ENCODE measurements at regions of chr1 and their contacts with region 1.

Region 1: GRCh38 chr1:223081181-223081994 is 61.7 kb downstream of the TLR5 start:
- DNase-seq: peak; percentile 88 to 93 (median 92)
- ATAC-seq: peak; percentile 91 to 92
- H3K4me3 ChIP-seq: peak overlapping the region; percentile 51
- H3K27ac ChIP-seq: peak overlapping the region; percentile 52
- H3K4me1 ChIP-seq: peaks cover 5% of the 10 kb centered on the region
- H3K27me3 ChIP-seq: no peaks in the 10 kb centered on the region

Region 2: GRCh38 chr1:222732216-222733159 is 348.9 kb before region 1 on chr1:
- intact Hi-C with region 1: loop called in 2 of 4 experiments (anchors 5 to 10 kb)
- DNase-seq: no peak
- ATAC-seq: no peak
- H3K4me3 ChIP-seq: no peak overlapping the region
- H3K27ac ChIP-seq: no peak overlapping the region
- H3K4me1 ChIP-seq: no peaks in the 10 kb centered on the region
- H3K27me3 ChIP-seq: no peaks in the 10 kb centered on the region

Region 3: GRCh38 chr1:222739465-222739864 is 341.9 kb before region 1 on chr1:
- intact Hi-C with region 1: loop called (anchors 2 to 10 kb)
- DNase-seq: no peak
- ATAC-seq: no peak
- H3K4me3 ChIP-seq: no peak overlapping the region
- H3K27ac ChIP-seq: no peak overlapping the region
- H3K4me1 ChIP-seq: no peaks in the 10 kb centered on the region
- H3K27me3 ChIP-seq: no peaks in the 10 kb centered on the region

Region 4: GRCh38 chr1:222792744-222793143 is 288.6 kb before region 1 on chr1:
- intact Hi-C with region 1: loop called (anchors 5 kb)
- DNase-seq: no peak
- ATAC-seq: no peak
- H3K4me3 ChIP-seq: no peak overlapping the region
- H3K27ac ChIP-seq: no peak overlapping the region
- H3K4me1 ChIP-seq: no peaks in the 10 kb centered on the region
- H3K27me3 ChIP-seq: no peaks in the 10 kb centered on the region

Region 5: DNA sequence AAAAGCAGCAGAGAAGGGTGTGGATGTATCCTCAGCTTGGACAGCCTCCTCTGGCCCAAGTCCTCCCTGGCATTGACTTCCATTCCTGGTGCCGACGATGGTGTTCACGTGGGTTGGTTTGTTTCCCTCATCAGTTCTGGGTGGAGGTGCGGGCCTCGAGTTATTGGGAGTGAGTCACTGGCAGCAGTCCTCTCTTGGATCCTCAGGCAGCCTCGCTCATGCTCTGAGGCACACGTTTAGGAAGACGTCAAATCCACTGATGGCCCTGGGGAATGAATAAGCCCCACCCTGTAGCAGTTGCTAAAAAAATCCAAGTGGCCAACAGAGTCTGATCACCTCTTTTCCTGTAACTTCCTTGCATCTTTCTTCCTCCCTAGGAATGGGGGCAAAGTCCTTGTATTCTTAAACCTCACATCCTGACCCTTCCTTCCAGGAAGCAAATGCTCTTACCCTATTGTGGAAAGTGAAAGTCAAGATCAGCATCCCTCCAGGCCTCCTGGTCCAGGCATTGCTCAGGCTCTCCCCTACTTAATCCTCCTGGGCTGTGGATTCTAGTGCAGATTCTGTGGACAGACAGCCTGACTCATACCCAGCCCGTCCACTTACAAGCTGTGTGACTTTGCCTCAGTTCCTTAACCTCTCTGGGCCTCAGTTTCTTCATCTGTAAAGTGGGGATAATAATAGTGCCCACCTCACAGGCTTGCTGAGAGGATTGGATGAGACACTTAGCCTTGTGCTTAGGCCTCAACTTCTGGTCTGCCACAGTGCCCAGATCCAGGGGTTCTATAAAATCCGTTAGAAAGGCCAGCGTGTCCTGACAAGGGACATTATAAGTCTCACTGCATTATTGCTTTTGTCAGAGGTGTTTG is 49.4 kb before region 1 on chr1:
- intact Hi-C with region 1: no loop called
- DNase-seq: peak; percentile 74 to 85 (median 77)
- ATAC-seq: peak; percentile 88 to 95
- H3K4me3 ChIP-seq: no peak overlapping the region
- H3K27ac ChIP-seq: peak overlapping the region; percentile 67
- H3K4me1 ChIP-seq: peaks cover 6% of the 10 kb centered on the region
- H3K27me3 ChIP-seq: no peaks in the 10 kb centered on the region